ENCODE measurements at regions of chr12 and their contacts with region 1.

Region 1: GRCh38 chr12:50763639-50764285 is at the start of gene ATF1:
- DNase-seq: peak; percentile 89 to 91 (median 91)
- H3K4me3 ChIP-seq: peak within 1 kb of the TSS; percentile 67 to 69
- H3K4me3 Mint-ChIP-seq: peak within 1 kb of the TSS; percentile 85 to 99 (median 93)
- H3K27ac ChIP-seq: peak within 1 kb of the TSS; percentile 77
- H3K27ac Mint-ChIP-seq: peak within 1 kb of the TSS; percentile 91 to 97 (median 96)
- H3K4me1 ChIP-seq: peaks cover 27% of the 10 kb centered on the region
- H3K4me1 Mint-ChIP-seq: peaks cover 18 to 48% (median 29%) of the 10 kb centered on the region in 4 donors
- H3K27me3 ChIP-seq: no peaks in the 10 kb centered on the region
- H3K27me3 Mint-ChIP-seq: no peaks in the 10 kb centered on the region
- total RNA-seq, gene ATF1: 52.2 to 52.3 TPM

Region 2: DNA sequence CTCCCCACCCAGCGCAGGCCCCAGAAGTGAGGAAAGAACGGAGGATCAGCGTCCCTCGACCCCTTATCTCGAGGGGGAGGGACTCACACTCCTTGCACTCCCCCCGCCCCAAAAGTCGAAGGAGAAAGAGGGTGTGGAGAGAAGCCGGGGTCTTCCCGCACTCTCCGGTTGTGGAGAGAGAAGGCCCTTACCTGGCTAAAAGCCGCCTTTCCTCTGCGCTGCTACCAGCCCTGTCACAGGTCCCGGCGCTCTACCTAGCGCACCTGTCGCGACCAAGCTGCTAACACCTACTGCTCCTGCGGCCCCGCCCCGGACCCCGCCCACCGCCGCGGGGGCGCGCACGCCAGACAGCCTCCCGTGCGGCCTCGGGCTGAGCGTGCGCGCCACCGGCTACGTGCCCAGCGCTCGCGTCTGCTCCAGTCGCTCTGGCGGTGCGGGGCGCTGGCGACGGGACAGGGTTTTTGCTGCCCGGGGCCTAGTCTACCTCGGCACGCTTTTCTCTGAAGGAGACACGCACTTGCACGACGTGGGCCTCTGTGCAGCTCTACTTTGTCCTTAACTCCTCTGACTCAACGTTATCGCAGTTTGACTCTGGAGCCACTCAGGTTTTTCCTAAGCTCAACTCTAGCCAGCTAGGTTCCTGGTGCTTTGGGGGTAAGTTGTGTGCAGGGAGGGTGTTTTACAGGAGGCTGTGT is 480.4 kb before region 1 on chr12 and contains the start of gene LIMA1:
- CTCF ChIA-PET with region 1: interaction called, 3 read pairs
- POLR2A ChIA-PET with region 1: interaction called, 3 read pairs
- intact Hi-C with region 1: loop called (anchors 1 kb)
- DNase-seq: peak; percentile 91 to 93 (median 91)
- H3K4me3 ChIP-seq: peak within 1 kb of the TSS; percentile 58 to 61
- H3K4me3 Mint-ChIP-seq: peak within 1 kb of the TSS; percentile 91 to 96 (median 92)
- H3K27ac ChIP-seq: peak within 1 kb of the TSS; percentile 70
- H3K27ac Mint-ChIP-seq: peak within 1 kb of the TSS; percentile 38 to 95 (median 87)
- H3K4me1 ChIP-seq: peaks cover 17% of the 10 kb centered on the region
- H3K4me1 Mint-ChIP-seq: peaks cover 9 to 18% (median 14%) of the 10 kb centered on the region in 4 donors
- H3K27me3 ChIP-seq: no peaks in the 10 kb centered on the region
- H3K27me3 Mint-ChIP-seq: no peaks in the 10 kb centered on the region
- total RNA-seq, gene LIMA1: 11.5 to 14.9 TPM

Region 3: DNA sequence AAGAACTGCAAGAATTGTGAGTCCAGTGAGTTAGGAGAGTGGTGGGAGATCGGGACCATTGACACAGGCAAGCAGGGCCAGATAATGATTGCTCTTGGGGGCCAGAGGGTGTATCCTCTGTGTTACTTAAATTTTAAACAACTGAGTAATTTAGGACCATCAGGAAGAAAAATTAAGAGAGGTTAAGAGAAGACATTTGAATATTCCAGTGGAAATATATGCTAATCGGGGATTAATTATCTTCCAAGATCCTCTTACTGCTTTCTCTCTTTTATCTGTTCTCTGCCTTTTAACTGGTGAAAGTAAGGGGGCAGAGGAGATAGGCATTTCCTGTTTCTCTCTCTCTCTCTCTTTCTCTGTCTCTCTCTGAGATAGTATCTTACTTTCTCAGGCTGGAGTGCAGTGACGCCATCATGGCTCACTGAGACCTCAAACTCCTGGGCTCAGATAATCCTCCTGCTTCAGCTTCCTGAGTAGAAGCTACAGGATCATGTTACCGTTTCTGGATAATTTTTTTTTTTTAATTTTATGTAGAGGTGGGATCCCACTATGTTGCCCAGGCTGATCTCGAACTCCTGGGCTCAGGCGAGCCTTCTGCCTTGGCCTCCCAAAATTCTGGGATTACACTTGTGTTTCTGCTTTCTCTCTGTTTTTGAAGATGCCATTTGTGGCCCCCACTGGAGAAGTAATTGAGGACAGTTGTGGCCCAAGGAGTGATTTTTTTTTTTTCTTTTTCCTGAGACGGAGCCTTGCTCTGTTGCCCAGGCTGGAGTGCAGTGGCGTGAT is 173.9 kb before region 1 on chr12:
- CTCF ChIA-PET with region 1: no interaction called
- POLR2A ChIA-PET with region 1: no interaction called
- intact Hi-C with region 1: no loop called
- DNase-seq: peak in 3 of 5 donors; percentile 2 to 30 (median 15)
- H3K4me3 ChIP-seq: no peak overlapping the region
- H3K4me3 Mint-ChIP-seq: peak overlapping the region in 5 of 8 donors; percentile 3 to 55 (median 19)
- H3K27ac ChIP-seq: no peak overlapping the region
- H3K27ac Mint-ChIP-seq: peak overlapping the region; percentile 13 to 65 (median 39)
- H3K4me1 ChIP-seq: peaks cover 12% of the 10 kb centered on the region
- H3K4me1 Mint-ChIP-seq: peaks cover 18 to 37% (median 21%) of the 10 kb centered on the region in 4 donors
- H3K27me3 ChIP-seq: no peaks in the 10 kb centered on the region
- H3K27me3 Mint-ChIP-seq: no peaks in the 10 kb centered on the region

Region 4: GRCh38 chr12:50753320-50753719 is 10.4 kb before region 1 on chr12:
- CTCF ChIA-PET with region 1: interaction called, 10 read pairs
- POLR2A ChIA-PET with region 1: interaction called, 3 read pairs
- intact Hi-C with region 1: no loop called
- DNase-seq: no peak
- H3K4me3 ChIP-seq: no peak overlapping the region
- H3K4me3 Mint-ChIP-seq: no peak overlapping the region
- H3K27ac ChIP-seq: no peak overlapping the region
- H3K27ac Mint-ChIP-seq: no peak overlapping the region
- H3K4me1 ChIP-seq: no peaks in the 10 kb centered on the region
- H3K4me1 Mint-ChIP-seq: peaks cover 0 to 2% (median 0%) of the 10 kb centered on the region in 4 donors
- H3K27me3 ChIP-seq: no peaks in the 10 kb centered on the region
- H3K27me3 Mint-ChIP-seq: no peaks in the 10 kb centered on the region

Region 5: DNA sequence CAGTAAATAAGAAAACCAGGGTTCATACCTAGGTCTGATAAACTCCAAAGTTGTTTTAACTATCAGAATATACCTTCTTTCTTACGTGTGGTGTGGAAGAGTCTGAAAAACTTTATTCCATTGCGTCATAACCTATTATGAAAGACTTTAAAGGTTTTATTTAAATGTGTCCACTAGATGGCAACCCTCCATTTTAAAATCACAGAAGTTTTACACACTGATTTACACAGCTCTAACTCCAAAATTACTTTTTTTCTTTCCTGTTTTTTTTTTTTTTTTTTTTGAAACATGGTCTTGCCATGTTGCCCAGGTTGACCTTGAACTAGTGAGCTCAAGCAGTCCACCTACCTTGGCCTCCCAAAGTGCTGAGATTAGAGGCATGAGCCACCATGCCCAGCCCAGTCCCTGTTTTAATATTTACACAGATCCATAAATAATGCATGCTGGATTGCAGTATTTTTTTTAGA is 61.6 kb after region 1 on chr12:
- CTCF ChIA-PET with region 1: interaction called, 18 read pairs
- POLR2A ChIA-PET with region 1: interaction called, 4 read pairs
- intact Hi-C with region 1: loop called (anchors 1 kb)
- DNase-seq: peak in 4 of 5 donors; percentile 47 to 65 (median 61)
- H3K4me3 ChIP-seq: no peak overlapping the region
- H3K4me3 Mint-ChIP-seq: peak overlapping the region in 1 of 8 donors; percentile 57
- H3K27ac ChIP-seq: peak overlapping the region; percentile 45
- H3K27ac Mint-ChIP-seq: peak overlapping the region; percentile 85 to 97 (median 93)
- H3K4me1 ChIP-seq: peaks cover 4% of the 10 kb centered on the region
- H3K4me1 Mint-ChIP-seq: peaks cover 4 to 9% (median 5%) of the 10 kb centered on the region in 4 donors
- H3K27me3 ChIP-seq: no peaks in the 10 kb centered on the region
- H3K27me3 Mint-ChIP-seq: peaks cover 0 to 5% of the 10 kb centered on the region in 2 donors

Region 6: GRCh38 chr12:51025836-51026638 is 262.3 kb after region 1 on chr12 and contains the start of gene SLC11A2:
- CTCF ChIA-PET with region 1: interaction called, 9 read pairs
- POLR2A ChIA-PET with region 1: interaction called, 31 read pairs
- intact Hi-C with region 1: loop called (anchors 1 kb)
- DNase-seq: peak; percentile 89 to 93 (median 89)
- H3K4me3 ChIP-seq: peak within 1 kb of the TSS; percentile 78 to 89
- H3K4me3 Mint-ChIP-seq: peak within 1 kb of the TSS; percentile 97 to 100 (median 98)
- H3K27ac ChIP-seq: peak within 1 kb of the TSS; percentile 83
- H3K27ac Mint-ChIP-seq: peak within 1 kb of the TSS; percentile 95 to 99 (median 98)
- H3K4me1 ChIP-seq: peaks cover 41% of the 10 kb centered on the region
- H3K4me1 Mint-ChIP-seq: peaks cover 26 to 68% (median 47%) of the 10 kb centered on the region in 4 donors
- H3K27me3 ChIP-seq: no peaks in the 10 kb centered on the region
- H3K27me3 Mint-ChIP-seq: no peaks in the 10 kb centered on the region
- total RNA-seq, gene SLC11A2: 55.1 to 62.7 TPM

Region 7: DNA sequence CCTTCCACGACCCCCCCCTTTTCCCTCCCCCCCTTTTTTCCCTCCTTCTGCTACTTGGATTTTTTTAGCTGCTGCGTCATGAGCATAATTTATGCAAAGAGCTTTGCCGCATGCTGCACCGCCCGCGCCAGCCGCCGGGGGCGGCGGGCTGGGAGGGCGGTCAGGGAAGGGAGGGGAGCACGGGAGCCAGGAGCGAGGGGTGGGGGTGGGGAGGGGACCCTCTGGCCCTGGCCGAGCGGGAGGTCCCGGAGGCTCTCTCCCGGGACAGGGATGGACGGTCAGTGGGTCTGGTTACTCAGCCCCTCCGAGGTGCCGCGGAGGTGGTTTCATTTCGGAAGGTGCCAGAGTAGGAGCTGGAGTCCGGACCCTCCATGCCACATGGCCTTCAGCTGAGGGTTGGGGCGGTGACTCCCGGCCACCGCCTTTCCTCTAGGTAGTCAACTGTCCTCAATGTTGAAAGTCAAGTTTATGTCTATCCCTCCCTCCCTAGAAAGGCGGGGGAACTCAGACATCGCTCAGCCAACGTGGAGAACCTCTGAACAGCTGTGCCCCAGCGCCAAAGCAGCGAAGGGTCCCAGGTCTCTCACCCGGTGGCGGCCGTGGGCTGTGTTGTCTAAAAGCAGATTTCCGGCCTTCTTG is 454.3 kb after region 1 on chr12 and contains the start of gene POU6F1:
- CTCF ChIA-PET with region 1: no interaction called
- POLR2A ChIA-PET with region 1: interaction called, 15 read pairs
- intact Hi-C with region 1: no loop called
- DNase-seq: peak; percentile 76 to 82 (median 80)
- H3K4me3 ChIP-seq: peak within 1 kb of the TSS; percentile 90 to 99
- H3K4me3 Mint-ChIP-seq: peak within 1 kb of the TSS; percentile 90 to 96 (median 94)
- H3K27ac ChIP-seq: peak within 1 kb of the TSS; percentile 91
- H3K27ac Mint-ChIP-seq: peak within 1 kb of the TSS; percentile 94 to 99 (median 97)
- H3K4me1 ChIP-seq: peaks cover 25% of the 10 kb centered on the region
- H3K4me1 Mint-ChIP-seq: peaks cover 19 to 39% (median 29%) of the 10 kb centered on the region in 4 donors
- H3K27me3 ChIP-seq: no peaks in the 10 kb centered on the region
- H3K27me3 Mint-ChIP-seq: no peaks in the 10 kb centered on the region
- total RNA-seq, gene POU6F1: 71.9 to 79.8 TPM

Region 8: DNA sequence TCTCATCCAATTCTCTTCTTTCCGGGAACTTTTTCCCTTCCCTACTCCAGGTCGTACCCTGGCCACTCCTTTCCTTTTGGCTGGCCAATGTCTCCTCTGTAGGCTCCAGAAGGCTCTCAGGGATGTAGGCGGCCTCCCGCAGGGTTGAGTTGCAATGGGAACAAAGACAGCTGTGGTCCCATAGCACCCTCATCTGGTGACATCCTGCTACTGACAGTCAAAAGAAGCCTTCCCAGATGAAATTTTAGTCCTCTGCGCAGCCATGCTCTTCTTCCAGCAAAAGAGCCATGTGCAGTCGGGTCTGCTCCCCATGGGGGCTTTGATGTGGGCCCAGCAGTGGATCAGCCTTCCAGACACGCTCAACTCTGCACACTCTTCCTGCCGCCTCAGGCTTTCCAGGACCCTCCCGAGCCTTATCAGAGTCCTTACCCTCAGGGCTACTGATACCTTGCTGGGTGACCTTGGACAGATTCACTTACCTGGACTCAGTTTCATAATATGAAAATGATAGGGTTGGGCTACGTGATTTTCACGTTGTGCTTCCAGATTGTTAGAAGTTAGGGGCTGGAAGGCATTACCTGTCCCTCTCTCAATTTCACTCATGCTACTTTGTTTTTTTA is 588.3 kb after region 1 on chr12:
- CTCF ChIA-PET with region 1: interaction called, 4 read pairs
- POLR2A ChIA-PET with region 1: no interaction called
- intact Hi-C with region 1: loop called (anchors 1 kb)
- DNase-seq: peak; percentile 49 to 60 (median 50)
- H3K4me3 ChIP-seq: no peak overlapping the region
- H3K4me3 Mint-ChIP-seq: no peak overlapping the region
- H3K27ac ChIP-seq: no peak overlapping the region
- H3K27ac Mint-ChIP-seq: peak overlapping the region in 5 of 7 donors; percentile 5 to 83 (median 28)
- H3K4me1 ChIP-seq: no peaks in the 10 kb centered on the region
- H3K4me1 Mint-ChIP-seq: peaks cover 0 to 12% (median 4%) of the 10 kb centered on the region in 4 donors
- H3K27me3 ChIP-seq: no peaks in the 10 kb centered on the region
- H3K27me3 Mint-ChIP-seq: no peaks in the 10 kb centered on the region